ENCODE measurements at regions of chr21 and their contacts with region 1.

Region 1: GRCh38 chr21:33374450-33375096 is 28.6 kb upstream of the IFNGR2 start:
- DNase-seq: peak; percentile 40 to 81 (median 54)
- ATAC-seq: peak; percentile 87
- H3K4me3 ChIP-seq: no peak overlapping the region
- H3K4me3 Mint-ChIP-seq: no peak overlapping the region
- H3K27ac ChIP-seq: no peak overlapping the region
- H3K27ac Mint-ChIP-seq: no peak overlapping the region
- H3K4me1 ChIP-seq: peaks cover 16% of the 10 kb centered on the region
- H3K4me1 Mint-ChIP-seq: peaks cover 7% of the 10 kb centered on the region
- H3K27me3 ChIP-seq: no peaks in the 10 kb centered on the region
- H3K27me3 Mint-ChIP-seq: no peaks in the 10 kb centered on the region
- CTCF ChIP-seq: peak; percentile 77

Region 2: GRCh38 chr21:32921632-32922230 is 452.8 kb before region 1 on chr21:
- CTCF ChIA-PET with region 1: no interaction called
- POLR2A ChIA-PET with region 1: no interaction called
- intact Hi-C with region 1: loop called in 1 of 2 experiments (anchors 5 kb)
- DNase-seq: peak in 13 of 14 experiments; percentile 9 to 64 (median 36)
- ATAC-seq: no peak
- H3K4me3 ChIP-seq: no peak overlapping the region
- H3K4me3 Mint-ChIP-seq: no peak overlapping the region
- H3K27ac ChIP-seq: no peak overlapping the region
- H3K27ac Mint-ChIP-seq: no peak overlapping the region
- H3K4me1 ChIP-seq: peaks cover 2% of the 10 kb centered on the region
- H3K4me1 Mint-ChIP-seq: peaks cover 19% of the 10 kb centered on the region
- H3K27me3 ChIP-seq: no peaks in the 10 kb centered on the region
- H3K27me3 Mint-ChIP-seq: no peaks in the 10 kb centered on the region
- CTCF ChIP-seq: peak; percentile 67

Region 3: DNA sequence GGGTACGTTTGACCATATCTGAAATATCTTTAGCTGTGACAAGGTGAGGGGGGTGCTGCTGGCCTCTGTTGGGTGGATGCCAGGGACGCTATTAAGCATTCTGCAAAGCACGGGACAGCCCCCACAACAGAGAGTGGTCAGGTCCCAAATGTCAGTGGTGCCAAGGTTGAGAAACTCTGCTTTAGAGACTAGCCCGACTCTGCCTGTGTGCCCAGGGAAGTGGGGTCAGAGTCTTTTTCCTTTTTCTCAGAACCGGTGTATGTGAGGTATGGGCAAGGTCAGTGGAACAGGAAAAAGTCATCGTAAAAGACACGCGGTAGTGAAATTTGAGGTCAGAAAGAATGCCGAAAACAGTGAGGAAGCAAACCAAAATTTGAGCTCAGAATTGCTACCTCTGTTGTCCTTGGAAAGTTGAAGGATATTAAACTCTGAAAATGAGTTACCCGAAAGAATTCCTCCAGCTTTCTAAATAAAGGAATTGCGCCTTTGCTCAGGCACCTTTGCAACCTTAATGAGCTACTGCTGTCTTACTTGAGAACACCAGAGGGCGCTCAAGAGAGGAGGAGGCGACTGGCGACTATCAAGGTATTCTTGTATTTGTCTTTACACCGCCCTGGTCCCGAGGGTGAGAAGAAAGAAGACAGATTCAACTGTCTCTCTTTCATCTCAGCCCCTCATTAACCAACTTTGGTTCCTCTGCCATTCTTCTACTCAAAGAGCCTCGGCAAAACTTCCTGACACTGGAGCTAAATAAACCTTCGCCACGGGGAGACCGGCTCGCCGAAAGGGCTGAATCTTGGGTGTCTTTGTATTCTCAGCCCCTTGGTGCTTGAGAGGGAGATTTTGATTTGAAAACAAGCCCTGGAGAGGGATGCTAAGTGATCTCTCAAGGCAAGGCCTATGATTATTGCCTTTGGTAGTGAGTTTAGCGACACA is 434.2 kb before region 1 on chr21:
- CTCF ChIA-PET with region 1: no interaction called
- POLR2A ChIA-PET with region 1: no interaction called
- intact Hi-C with region 1: loop called in 1 of 2 experiments (anchors 5 kb)
- DNase-seq: peak in 12 of 14 experiments; percentile 7 to 79 (median 20)
- ATAC-seq: peak; percentile 61
- H3K4me3 ChIP-seq: no peak overlapping the region
- H3K4me3 Mint-ChIP-seq: no peak overlapping the region
- H3K27ac ChIP-seq: no peak overlapping the region
- H3K27ac Mint-ChIP-seq: no peak overlapping the region
- H3K4me1 ChIP-seq: no peaks in the 10 kb centered on the region
- H3K4me1 Mint-ChIP-seq: no peaks in the 10 kb centered on the region
- H3K27me3 ChIP-seq: no peaks in the 10 kb centered on the region
- H3K27me3 Mint-ChIP-seq: no peaks in the 10 kb centered on the region
- CTCF ChIP-seq: peak; percentile 82

Region 4: DNA sequence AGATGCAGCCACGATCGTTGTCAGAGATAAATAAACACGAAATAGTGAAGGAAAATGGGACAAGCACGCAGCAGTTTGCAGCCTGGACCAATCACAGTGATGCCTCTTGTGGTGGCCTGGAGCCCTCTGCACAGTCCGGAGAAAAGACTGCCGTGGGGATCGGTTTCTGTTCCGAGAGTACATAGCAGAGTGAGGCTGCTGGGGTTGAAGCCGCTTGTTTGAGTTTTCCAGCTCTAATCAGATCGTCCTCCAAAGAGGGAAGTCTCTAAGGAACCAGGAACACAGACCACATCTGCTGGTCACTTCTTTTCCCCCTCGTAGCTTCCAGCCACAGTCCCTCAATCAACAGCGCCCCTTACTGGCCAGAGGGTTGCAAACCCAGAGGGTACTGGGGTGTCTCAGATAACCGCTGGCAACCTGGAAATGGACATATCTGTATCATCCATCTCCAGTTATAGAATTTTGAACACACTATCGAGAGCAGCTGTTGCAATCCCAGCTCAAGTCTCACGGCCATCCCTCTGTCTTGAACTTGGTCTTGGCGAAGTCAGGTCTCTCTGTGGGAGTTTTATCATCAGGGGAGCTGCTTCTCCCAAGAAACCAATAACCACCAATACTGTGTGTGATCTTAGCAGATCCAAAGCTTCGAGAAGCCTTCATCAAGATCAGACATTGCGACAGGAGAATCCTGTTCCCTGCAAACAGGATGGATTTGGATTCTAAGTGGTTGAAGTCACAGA is 247.2 kb before region 1 on chr21:
- CTCF ChIA-PET with region 1: no interaction called
- POLR2A ChIA-PET with region 1: no interaction called
- intact Hi-C with region 1: loop called in 1 of 2 experiments (anchors 5 kb)
- DNase-seq: peak; percentile 28 to 75 (median 50)
- ATAC-seq: peak; percentile 60
- H3K4me3 ChIP-seq: peak overlapping the region; percentile 40
- H3K4me3 Mint-ChIP-seq: peak overlapping the region; percentile 77
- H3K27ac ChIP-seq: no peak overlapping the region
- H3K27ac Mint-ChIP-seq: no peak overlapping the region
- H3K4me1 ChIP-seq: peaks cover 7% of the 10 kb centered on the region
- H3K4me1 Mint-ChIP-seq: peaks cover 14% of the 10 kb centered on the region
- H3K27me3 ChIP-seq: peaks cover 0 to 3% of the 10 kb centered on the region in 2 experiments
- H3K27me3 Mint-ChIP-seq: peaks cover 30% of the 10 kb centered on the region
- CTCF ChIP-seq: peak; percentile 73

Region 5: DNA sequence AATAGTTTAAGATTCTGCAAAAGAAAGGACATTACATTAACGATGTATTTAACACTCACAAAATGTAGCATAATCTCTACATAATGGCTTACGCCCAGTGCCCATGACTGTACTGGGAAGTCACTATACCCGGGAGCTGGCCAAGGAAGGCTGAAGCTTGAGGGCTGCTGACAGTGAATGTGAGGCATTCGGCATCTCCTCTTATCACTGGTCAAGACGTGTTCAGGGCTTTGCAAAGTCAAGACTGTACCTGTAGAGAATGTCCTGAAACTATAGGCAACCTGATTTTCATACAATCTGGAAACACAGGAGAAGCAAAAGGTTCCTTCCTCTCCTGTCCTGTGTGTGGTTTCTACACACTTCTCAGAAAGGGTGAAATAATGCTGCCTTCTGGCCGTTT is 15.9 kb after region 1 on chr21:
- CTCF ChIA-PET with region 1: no interaction called
- POLR2A ChIA-PET with region 1: no interaction called
- intact Hi-C with region 1: no loop called
- DNase-seq: no peak
- ATAC-seq: no peak
- H3K4me3 ChIP-seq: no peak overlapping the region
- H3K4me3 Mint-ChIP-seq: no peak overlapping the region
- H3K27ac ChIP-seq: no peak overlapping the region
- H3K27ac Mint-ChIP-seq: no peak overlapping the region
- H3K4me1 ChIP-seq: peaks cover 3% of the 10 kb centered on the region
- H3K4me1 Mint-ChIP-seq: peaks cover 3% of the 10 kb centered on the region
- H3K27me3 ChIP-seq: no peaks in the 10 kb centered on the region
- H3K27me3 Mint-ChIP-seq: no peaks in the 10 kb centered on the region
- CTCF ChIP-seq: no peak

Measured in CD4-positive, alpha-beta T cell (primary cell).